HEK293 (cell line): ENCODE measurements at regions of chr15 and their contacts with region 1.

Region 1: DNA sequence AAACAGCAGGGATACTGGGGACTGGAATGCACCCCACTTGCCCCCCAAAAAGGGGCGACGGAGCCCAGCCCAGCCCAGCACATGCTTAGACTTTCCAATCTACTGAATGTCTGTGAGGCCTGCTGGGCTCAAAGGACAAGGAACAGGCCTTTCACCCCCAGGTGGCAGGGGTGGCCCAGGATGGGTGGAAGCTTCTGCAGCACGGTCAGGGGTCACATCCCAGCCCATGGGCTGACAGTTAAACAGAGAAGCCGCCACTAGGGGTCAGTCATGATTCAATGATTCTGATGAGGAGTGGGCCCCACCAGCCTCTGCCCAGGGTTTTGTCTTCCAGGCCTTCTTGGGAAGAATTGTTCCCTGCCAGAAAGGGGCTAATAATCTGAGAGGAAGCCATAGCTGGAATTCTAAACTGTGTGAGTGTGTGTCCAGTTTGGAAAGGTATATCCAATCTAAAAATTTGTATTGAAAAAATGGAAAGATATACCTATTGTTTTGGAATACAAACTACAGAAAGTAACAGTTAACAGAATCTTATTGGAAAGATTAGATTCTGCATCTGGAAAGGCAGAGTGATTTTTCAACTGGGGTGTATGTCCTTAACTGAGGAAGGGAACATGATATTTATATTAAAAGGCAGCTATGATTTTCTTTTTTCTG is 2.2 kb downstream of the CHRNB4 start:
- H3K4me3 ChIP-seq: no peak overlapping the region
- H3K27ac ChIP-seq: no peak overlapping the region
- H3K4me1 ChIP-seq: peaks cover 2% of the 10 kb centered on the region; the same call in 1 of the 2 replicates
- CTCF ChIP-seq: peak; percentile 55

Region 2: GRCh38 chr15:78177447-78177873 is 461.3 kb before region 1 on chr15:
- CTCF ChIA-PET with region 1: no interaction called
- POLR2A ChIA-PET with region 1: no interaction called
- H3K4me3 ChIP-seq: no peak overlapping the region
- H3K27ac ChIP-seq: no peak overlapping the region
- H3K4me1 ChIP-seq: no peaks in the 10 kb centered on the region
- CTCF ChIP-seq: peak; percentile 71

Region 3: DNA sequence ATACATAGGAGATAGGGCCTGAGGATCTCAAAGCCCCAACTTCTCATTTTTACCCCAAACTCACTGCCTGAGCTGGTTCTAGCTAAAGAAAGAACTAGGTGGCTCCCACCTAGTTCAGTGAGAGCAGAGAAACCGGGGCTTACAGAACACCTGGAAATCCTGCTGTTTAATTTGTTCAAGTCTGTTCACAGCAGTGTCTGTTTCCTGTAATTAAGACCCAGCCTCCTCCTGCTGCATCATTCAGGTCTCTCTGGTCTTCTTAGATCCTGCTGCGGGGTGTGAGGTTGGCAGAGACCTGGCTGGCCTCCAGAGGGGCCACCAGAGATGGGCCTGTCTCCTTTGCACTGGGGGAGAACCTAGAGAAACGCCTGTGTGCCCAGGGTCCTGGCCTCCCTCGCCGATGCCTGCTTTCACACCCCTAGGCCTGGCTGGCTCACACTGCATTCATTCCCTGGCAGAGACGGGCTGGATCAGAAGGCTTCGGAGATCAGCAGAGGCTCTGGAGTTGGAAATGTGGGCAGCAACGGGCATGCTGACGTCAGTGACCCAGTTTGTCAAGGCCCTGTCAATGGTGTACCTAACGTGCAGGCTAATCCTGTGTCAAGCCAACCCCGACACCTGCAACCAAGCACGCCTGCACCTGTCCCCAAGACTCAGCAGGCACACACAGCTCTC is 13.0 kb before region 1 on chr15:
- CTCF ChIA-PET with region 1: interaction called, 23 read pairs
- POLR2A ChIA-PET with region 1: no interaction called
- H3K4me3 ChIP-seq: no peak overlapping the region
- H3K27ac ChIP-seq: no peak overlapping the region
- H3K4me1 ChIP-seq: no peaks in the 10 kb centered on the region
- CTCF ChIP-seq: no peak

Region 4: DNA sequence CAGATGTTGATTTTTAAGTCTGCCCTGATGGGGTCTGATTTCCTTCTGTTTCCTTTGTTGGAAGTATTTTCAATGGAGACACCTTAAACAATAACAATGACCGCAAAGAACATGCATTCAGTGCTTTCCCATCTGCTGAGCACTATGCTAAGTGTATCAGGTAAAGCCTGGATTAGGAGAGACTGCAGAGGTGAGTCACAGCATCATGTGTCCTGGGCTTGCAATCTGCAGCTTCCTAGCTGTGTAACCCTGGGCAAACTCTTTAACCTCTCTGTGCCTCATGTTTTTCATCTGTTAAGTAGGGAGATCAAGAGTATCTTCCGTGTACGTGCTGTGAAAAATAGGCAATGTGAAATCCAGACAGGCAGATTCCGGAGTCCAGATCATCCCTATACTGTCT is 15.5 kb after region 1 on chr15:
- CTCF ChIA-PET with region 1: interaction called, 17 read pairs
- POLR2A ChIA-PET with region 1: no interaction called
- H3K4me3 ChIP-seq: no peak overlapping the region
- H3K27ac ChIP-seq: no peak overlapping the region
- H3K4me1 ChIP-seq: no peaks in the 10 kb centered on the region
- CTCF ChIP-seq: no peak

Region 5: GRCh38 chr15:78685159-78685921 is 46.6 kb after region 1 on chr15:
- CTCF ChIA-PET with region 1: interaction called, 21 read pairs
- POLR2A ChIA-PET with region 1: no interaction called
- H3K4me3 ChIP-seq: no peak overlapping the region
- H3K27ac ChIP-seq: no peak overlapping the region
- H3K4me1 ChIP-seq: 0 out of 2 replicates have a peak, but pooled peaks cover 5% of the 10 kb centered on the region
- CTCF ChIP-seq: no peak

Region 6: DNA sequence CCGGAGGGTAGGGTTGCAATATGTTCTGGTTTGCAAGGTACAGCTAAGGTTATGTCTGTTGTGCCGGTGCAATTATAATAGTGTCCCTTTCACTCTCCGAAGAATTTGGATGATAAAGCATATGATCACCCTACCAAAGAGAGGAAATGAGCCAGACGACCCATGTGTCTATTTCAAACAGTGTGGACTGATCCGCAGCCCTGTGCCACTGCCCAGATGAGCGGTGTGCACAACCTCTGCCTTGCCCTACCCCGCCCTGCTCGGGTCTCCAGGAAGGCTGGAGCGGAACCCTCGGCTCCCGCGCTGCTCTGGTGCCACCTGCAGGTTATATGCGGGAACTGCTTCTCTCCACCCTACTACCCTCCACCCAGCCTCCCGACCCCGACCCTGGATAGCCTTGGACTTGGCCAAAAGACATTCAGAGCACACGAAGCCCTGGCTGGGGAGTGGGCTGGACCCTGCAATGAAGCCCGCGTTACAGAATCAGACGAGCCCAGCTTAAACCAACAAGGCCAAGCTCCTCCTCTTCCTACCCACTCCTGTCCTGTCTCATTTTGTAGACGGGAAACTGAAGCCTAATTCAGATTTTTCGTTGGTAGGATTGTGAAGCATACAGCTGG is 70.6 kb after region 1 on chr15:
- CTCF ChIA-PET with region 1: interaction called, 119 read pairs
- POLR2A ChIA-PET with region 1: no interaction called
- H3K4me3 ChIP-seq: no peak overlapping the region
- H3K27ac ChIP-seq: no peak overlapping the region
- H3K4me1 ChIP-seq: no peaks in the 10 kb centered on the region
- CTCF ChIP-seq: peak; percentile 94

Region 7: GRCh38 chr15:78739996-78740903 is 101.5 kb after region 1 on chr15:
- CTCF ChIA-PET with region 1: interaction called, 37 read pairs
- POLR2A ChIA-PET with region 1: no interaction called
- H3K4me3 ChIP-seq: no peak overlapping the region
- H3K27ac ChIP-seq: no peak overlapping the region
- H3K4me1 ChIP-seq: no peaks in the 10 kb centered on the region
- CTCF ChIP-seq: no peak

Region 8: DNA sequence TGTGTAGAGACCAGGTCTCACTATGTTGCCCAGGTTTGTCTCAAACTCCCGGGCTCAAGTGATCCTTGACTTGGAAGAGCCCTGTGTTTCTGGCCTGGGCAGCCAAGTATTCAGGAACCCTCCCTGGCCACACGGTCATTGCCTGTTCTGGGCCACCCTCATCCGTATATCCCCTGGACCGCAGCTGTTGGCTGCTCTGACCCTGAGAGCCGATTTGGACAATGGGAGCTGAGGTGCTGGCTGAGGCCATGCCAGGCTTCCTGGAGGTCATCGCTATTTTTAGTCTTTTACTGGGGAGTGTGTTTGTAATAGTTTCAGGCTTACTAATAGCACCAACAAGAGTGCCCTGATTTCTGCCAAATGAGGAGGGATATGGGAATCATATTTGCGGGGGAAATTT is 111.8 kb after region 1 on chr15:
- CTCF ChIA-PET with region 1: interaction called, 22 read pairs
- POLR2A ChIA-PET with region 1: no interaction called
- H3K4me3 ChIP-seq: peak overlapping the region; percentile 12; the same call in 1 of the 2 replicates
- H3K27ac ChIP-seq: no peak overlapping the region
- H3K4me1 ChIP-seq: no peaks in the 10 kb centered on the region
- CTCF ChIP-seq: no peak